Motor neuron (in vitro differentiated cells): ENCODE measurements at regions of chr5 and their contacts with region 1.

Region 1: GRCh38 chr5:7754992-7755596 is 95.8 kb downstream of the CFAP90 start:
- ATAC-seq: peak; percentile 84 to 98 (median 89)
- H3K4me3 ChIP-seq: no peak overlapping the region
- H3K27ac ChIP-seq: no peak overlapping the region
- H3K4me1 ChIP-seq: peaks cover 0 to 8% of the 10 kb centered on the region in 2 donors

Region 2: DNA sequence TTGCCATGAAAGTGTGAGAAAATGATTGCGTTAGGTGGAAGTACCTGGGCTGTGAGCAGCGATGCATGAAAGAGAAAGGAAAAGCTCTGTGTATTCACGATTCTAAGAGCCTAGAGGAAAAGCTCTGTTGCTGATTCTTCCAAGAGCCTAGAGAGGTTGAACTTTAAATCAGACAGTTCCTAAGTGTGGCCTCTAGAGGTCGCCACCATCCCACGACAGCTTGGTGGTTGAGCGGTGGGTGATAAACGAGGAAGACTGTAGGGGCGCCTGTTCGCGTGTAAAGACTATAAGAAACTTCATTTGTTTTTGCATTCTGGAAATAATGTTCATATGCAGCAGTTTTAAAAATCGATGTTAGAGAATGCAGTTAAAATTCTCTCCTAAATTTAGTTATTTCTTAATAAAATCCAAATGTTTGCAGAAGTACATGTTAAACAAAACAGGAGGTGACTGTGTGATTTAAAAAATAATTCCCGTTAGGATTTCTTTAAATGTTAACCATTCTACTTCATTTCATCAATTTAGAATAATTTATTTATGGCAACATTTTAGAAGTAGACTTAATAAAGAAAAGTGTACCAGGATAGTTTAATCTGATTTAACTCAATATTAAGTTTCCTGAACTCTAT is 934.1 kb before region 1 on chr5:
- in situ Hi-C with region 1: loop called in 1 of 9 experiments (anchors 25 kb)
- ATAC-seq: peak; percentile 48 to 85 (median 66)
- H3K4me3 ChIP-seq: no peak overlapping the region
- H3K27ac ChIP-seq: no peak overlapping the region
- H3K4me1 ChIP-seq: peaks cover 2 to 3% of the 10 kb centered on the region in 2 donors

Region 3: GRCh38 chr5:7412409-7412808 is 342.7 kb before region 1 on chr5:
- in situ Hi-C with region 1: loop called in 1 of 9 experiments (anchors 25 kb)
- ATAC-seq: peak in 1 of 8 experiments; percentile 76
- H3K4me3 ChIP-seq: no peak overlapping the region
- H3K27ac ChIP-seq: no peak overlapping the region
- H3K4me1 ChIP-seq: peaks cover 5 to 11% of the 10 kb centered on the region in 2 donors